HCT116 (cell line): ENCODE measurements at regions of chr1 and their contacts with region 1.

Region 1: DNA sequence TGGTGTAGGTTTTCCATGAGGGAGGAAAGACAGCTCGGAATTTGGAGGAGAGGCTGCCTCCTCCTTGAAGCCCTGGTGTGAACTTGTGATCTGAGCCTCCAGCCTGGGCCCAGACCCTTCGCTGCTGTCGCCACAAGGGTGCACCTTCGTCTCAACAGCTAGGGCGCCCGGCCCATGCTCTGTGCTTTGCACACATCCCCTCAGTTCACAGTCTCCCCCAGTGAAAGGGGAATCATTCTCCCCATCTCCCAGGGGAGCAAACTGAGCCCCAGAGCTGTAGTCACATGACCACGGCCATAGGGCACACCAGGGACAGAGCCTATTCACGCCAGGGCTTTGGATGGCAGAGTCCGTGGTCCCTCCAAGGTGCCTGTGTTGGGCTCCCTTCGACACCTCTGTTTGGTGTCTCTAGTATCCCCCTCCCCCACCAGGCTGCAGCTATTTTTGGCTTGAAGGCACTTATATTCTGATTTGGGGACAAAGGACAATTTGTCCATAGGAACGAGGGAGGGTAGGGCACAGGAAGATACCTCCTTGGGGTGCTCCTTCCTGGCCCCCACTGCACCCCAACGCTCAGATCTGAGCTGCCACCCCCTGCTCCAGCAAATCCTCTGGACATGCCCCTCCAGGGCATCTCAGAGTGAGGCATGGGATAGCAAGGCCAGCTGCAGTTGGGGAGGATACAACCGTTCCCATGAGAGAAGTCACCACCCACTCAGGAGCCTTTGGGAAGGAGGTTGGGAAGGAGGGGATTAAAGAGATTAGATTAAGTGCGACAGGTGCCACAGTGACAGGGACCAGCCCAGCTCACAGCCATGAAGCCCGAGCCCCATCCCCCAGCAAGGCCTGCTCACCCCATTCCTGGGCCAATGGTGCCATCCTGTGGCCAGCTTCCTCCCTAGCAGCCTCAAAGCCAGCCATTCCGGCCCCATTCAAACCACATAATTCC is 15.7 kb downstream of the MATN1 start:
- DNase-seq: peak; percentile 48
- ATAC-seq: peak; percentile 97
- H3K4me3 ChIP-seq: no peak overlapping the region
- H3K27ac ChIP-seq: no peak overlapping the region
- H3K4me1 ChIP-seq: peaks cover 0 to 12% of the 10 kb centered on the region in 2 experiments; a peak in 2 of 4 replicates
- H3K27me3 ChIP-seq: no peaks in the 10 kb centered on the region
- CTCF ChIP-seq: peak; percentile 72 to 86 (median 86)
- POLR2A ChIP-seq: no peak
- RAD21 ChIP-seq: peak; percentile 100

Region 2: DNA sequence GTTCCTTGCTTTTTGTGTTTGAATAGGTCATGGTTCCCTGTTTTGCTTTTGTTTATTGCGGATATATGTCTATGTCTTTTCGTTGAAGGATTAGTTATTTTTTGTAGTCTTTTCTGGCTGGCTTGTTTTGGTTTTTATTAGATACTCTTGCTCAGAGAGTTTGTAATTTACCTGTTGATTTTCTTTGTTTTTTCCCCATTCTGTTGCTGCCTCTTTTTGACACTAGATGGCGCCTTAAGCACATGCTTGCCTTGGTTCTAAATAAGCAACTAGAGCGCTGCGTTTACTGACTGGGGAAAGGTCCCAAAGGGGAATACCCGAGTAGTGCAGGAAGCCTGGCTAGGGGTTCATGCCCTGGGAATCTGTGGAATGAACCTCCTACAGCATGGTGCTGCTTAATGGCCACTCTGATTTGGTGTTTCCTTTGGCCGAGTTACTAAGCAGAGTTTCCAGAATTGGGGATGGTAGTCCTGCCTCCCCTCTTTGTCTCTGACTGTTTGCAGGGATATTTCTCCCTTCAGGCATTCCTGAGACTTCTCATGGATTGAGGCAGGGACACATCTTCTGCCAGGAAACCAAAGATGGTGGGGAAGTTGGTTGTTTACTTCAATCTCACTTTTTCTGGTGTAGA is 1328.1 kb before region 1 on chr1:
- CTCF ChIA-PET with region 1: no interaction called
- POLR2A ChIA-PET with region 1: no interaction called
- RAD21 ChIA-PET with region 1: no interaction called
- intact Hi-C with region 1: loop called (anchors 1 kb)
- DNase-seq: peak; percentile 72
- ATAC-seq: peak; percentile 67
- H3K4me3 ChIP-seq: no peak overlapping the region
- H3K27ac ChIP-seq: no peak overlapping the region
- H3K4me1 ChIP-seq: peaks cover 0 to 5% of the 10 kb centered on the region in 2 experiments; a peak in 1 of 4 replicates
- H3K27me3 ChIP-seq: no peaks in the 10 kb centered on the region
- CTCF ChIP-seq: peak; percentile 87 to 99 (median 93)
- POLR2A ChIP-seq: no peak
- RAD21 ChIP-seq: peak; percentile 96

Region 3: GRCh38 chr1:29698033-29698432 is 1009.7 kb before region 1 on chr1:
- CTCF ChIA-PET with region 1: no interaction called
- POLR2A ChIA-PET with region 1: no interaction called
- RAD21 ChIA-PET with region 1: no interaction called
- intact Hi-C with region 1: loop called (anchors 2 kb)
- DNase-seq: peak; percentile 57
- ATAC-seq: peak; percentile 99
- H3K4me3 ChIP-seq: no peak overlapping the region
- H3K27ac ChIP-seq: no peak overlapping the region
- H3K4me1 ChIP-seq: peaks cover 3 to 9% of the 10 kb centered on the region in 2 experiments; a peak in 2 of 4 replicates
- H3K27me3 ChIP-seq: peaks cover 24% of the 10 kb centered on the region
- CTCF ChIP-seq: peak; percentile 70 to 85 (median 84)
- POLR2A ChIP-seq: no peak
- RAD21 ChIP-seq: peak; percentile 78

Region 4: GRCh38 chr1:30085811-30086770 is 621.6 kb before region 1 on chr1:
- CTCF ChIA-PET with region 1: no interaction called
- POLR2A ChIA-PET with region 1: no interaction called
- RAD21 ChIA-PET with region 1: no interaction called
- intact Hi-C with region 1: loop called (anchors 5 kb)
- DNase-seq: no peak
- ATAC-seq: peak; percentile 76
- H3K4me3 ChIP-seq: no peak overlapping the region
- H3K27ac ChIP-seq: no peak overlapping the region
- H3K4me1 ChIP-seq: peaks cover 16 to 31% of the 10 kb centered on the region in 2 experiments
- H3K27me3 ChIP-seq: no peaks in the 10 kb centered on the region
- CTCF ChIP-seq: peak; percentile 81 to 89 (median 86)
- POLR2A ChIP-seq: no peak
- RAD21 ChIP-seq: peak; percentile 83

Region 5: GRCh38 chr1:30353637-30354036 is 354.0 kb before region 1 on chr1:
- CTCF ChIA-PET with region 1: interaction called, 13 read pairs
- POLR2A ChIA-PET with region 1: no interaction called
- RAD21 ChIA-PET with region 1: interaction called in 1 of 2 experiments, 3 read pairs
- intact Hi-C with region 1: no loop called
- DNase-seq: no peak
- ATAC-seq: peak; percentile 82
- H3K4me3 ChIP-seq: no peak overlapping the region
- H3K27ac ChIP-seq: no peak overlapping the region
- H3K4me1 ChIP-seq: no peaks in the 10 kb centered on the region
- H3K27me3 ChIP-seq: peaks cover 17% of the 10 kb centered on the region
- CTCF ChIP-seq: peak; percentile 26 to 47 (median 44); a peak in 5 of 6 replicates
- POLR2A ChIP-seq: no peak
- RAD21 ChIP-seq: peak; percentile 22; the same call in 1 of the 2 replicates

Region 6: GRCh38 chr1:30437059-30437576 is 270.6 kb before region 1 on chr1:
- CTCF ChIA-PET with region 1: no interaction called
- POLR2A ChIA-PET with region 1: no interaction called
- RAD21 ChIA-PET with region 1: no interaction called
- intact Hi-C with region 1: loop called (anchors 10 kb)
- DNase-seq: no peak
- ATAC-seq: no peak
- H3K4me3 ChIP-seq: no peak overlapping the region
- H3K27ac ChIP-seq: no peak overlapping the region
- H3K4me1 ChIP-seq: no peaks in the 10 kb centered on the region
- H3K27me3 ChIP-seq: peaks cover 8% of the 10 kb centered on the region; the same call in 1 of the 2 replicates
- CTCF ChIP-seq: no peak
- POLR2A ChIP-seq: no peak
- RAD21 ChIP-seq: no peak